CD4-positive, alpha-beta T cell (primary cell): ENCODE measurements at regions of chr22 and their contacts with region 1.

Region 1: DNA sequence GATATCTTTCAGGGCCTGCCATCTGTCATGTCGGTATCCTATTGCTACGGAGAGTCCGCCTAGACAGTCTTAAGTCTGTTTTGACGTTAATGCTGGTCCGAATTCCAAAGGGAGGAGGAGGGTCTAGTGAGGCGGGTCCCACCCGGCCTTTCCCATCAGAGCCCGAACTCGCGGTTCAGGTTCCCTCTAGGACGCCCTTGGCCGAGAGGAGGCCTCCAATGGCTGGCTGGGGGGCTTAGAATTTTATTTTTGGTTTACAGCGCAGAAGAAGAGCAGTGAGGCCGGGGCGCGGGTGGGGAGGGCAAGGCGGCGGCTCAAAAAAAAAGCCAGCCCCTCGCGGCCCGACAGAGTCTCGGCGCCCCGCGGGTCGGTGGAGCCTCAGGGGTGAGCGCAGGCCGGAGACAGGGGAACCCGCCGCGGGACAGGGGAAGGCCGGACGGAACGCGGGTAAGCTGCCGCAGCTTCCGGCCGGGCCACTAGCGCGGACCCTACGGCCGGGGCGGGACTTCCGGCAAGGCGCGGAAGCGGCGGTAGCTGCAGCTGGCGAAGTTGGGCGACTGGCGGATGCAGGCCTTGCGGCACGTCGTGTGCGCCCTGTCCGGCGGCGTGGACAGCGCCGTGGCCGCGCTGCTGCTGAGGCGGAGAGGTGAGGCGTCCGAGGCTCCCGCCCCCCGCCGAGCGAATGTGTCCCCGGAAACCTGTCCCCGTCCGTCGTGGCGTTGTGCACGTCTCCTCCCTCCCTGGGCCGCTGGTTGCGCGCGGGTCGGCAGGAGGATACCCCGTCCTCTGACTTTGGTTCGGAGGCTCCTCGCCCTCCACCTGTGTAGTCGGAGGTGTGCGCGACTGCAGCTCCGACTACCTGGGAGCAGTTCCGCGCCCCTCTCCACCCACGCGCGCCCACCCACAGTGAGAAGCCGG is at the start of gene TRMU:
- DNase-seq: peak; percentile 34 to 86 (median 70)
- ATAC-seq: peak; percentile 78
- H3K4me3 ChIP-seq: peak within 1 kb of the TSS; percentile 91
- H3K4me3 Mint-ChIP-seq: peak within 1 kb of the TSS; percentile 95
- H3K27ac ChIP-seq: peak within 1 kb of the TSS; percentile 62 to 75
- H3K27ac Mint-ChIP-seq: peak within 1 kb of the TSS; percentile 88
- H3K4me1 ChIP-seq: peaks cover 20% of the 10 kb centered on the region
- H3K4me1 Mint-ChIP-seq: peaks cover 43% of the 10 kb centered on the region
- H3K27me3 ChIP-seq: no peaks in the 10 kb centered on the region
- H3K27me3 Mint-ChIP-seq: no peaks in the 10 kb centered on the region
- CTCF ChIP-seq: no peak
- total RNA-seq, gene TRMU: 65.2 to 65.4 TPM

Region 2: GRCh38 chr22:46296257-46297150 is 39.0 kb before region 1 on chr22 and contains the start of gene GTSE1:
- CTCF ChIA-PET with region 1: no interaction called
- POLR2A ChIA-PET with region 1: no interaction called
- intact Hi-C with region 1: loop called in 1 of 2 experiments (anchors 2 kb)
- DNase-seq: peak; percentile 93 to 99 (median 97)
- ATAC-seq: peak; percentile 98
- H3K4me3 ChIP-seq: peak within 1 kb of the TSS; percentile 77
- H3K4me3 Mint-ChIP-seq: peak within 1 kb of the TSS; percentile 90
- H3K27ac ChIP-seq: peak within 1 kb of the TSS; percentile 75 to 91
- H3K27ac Mint-ChIP-seq: peak within 1 kb of the TSS; percentile 91
- H3K4me1 ChIP-seq: peaks cover 23% of the 10 kb centered on the region
- H3K4me1 Mint-ChIP-seq: peaks cover 26% of the 10 kb centered on the region
- H3K27me3 ChIP-seq: no peaks in the 10 kb centered on the region
- H3K27me3 Mint-ChIP-seq: peaks cover 4% of the 10 kb centered on the region
- CTCF ChIP-seq: peak; percentile 21
- total RNA-seq, gene GTSE1: 0.14 to 0.89 TPM

Region 3: DNA sequence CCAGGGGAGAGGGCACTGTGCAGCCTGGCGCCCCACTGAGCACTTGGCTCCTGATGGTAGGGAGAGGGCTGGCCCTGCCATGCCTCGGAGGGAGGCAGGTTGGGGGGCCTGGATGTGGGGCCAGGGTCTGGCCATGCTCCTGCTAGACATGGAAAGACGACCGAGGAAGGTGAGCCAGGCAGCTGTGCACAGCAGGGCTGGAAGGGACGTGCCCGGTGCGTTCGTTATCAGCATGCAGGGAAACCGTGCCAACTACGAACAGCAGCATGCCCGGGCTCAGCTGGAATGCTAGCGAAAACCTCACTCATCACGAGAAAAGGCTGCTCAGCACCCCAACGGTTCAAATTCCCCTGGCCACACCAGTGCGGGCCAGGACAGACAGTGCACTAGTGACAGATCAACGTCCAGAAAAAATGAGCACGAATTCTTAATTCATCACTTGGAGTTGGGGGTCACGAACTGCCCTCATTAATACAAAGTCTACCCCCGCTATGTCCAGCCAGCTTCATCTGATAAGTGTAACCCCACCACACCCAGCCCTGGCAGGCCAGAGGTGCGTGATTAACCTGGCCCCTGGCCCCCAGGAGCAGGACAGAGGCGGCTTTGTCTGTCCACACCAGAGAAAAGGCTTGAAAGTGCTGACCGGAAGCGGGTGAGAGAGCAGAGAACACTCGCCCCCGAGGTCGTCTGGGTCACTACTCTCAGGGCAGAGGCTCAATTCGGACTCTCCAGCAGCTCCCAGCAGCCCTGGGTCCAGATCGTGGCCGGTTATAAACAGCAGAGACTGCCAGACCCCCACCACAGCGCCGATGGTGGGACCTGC is 117.8 kb after region 1 on chr22:
- CTCF ChIA-PET with region 1: no interaction called
- POLR2A ChIA-PET with region 1: no interaction called
- intact Hi-C with region 1: no loop called
- DNase-seq: no peak
- ATAC-seq: no peak
- H3K4me3 ChIP-seq: no peak overlapping the region
- H3K4me3 Mint-ChIP-seq: no peak overlapping the region
- H3K27ac ChIP-seq: no peak overlapping the region
- H3K27ac Mint-ChIP-seq: no peak overlapping the region
- H3K4me1 ChIP-seq: no peaks in the 10 kb centered on the region
- H3K4me1 Mint-ChIP-seq: no peaks in the 10 kb centered on the region
- H3K27me3 ChIP-seq: no peaks in the 10 kb centered on the region
- H3K27me3 Mint-ChIP-seq: peaks cover 6% of the 10 kb centered on the region
- CTCF ChIP-seq: no peak